GM13976 (cell line): ENCODE measurements at regions of chr11 and their contacts with region 1.

Region 1: GRCh38 chr11:115912484-115912945 is 408.3 kb upstream of the CADM1 start:
- DNase-seq: no peak
- CTCF ChIP-seq: peak; percentile 30

Region 2: DNA sequence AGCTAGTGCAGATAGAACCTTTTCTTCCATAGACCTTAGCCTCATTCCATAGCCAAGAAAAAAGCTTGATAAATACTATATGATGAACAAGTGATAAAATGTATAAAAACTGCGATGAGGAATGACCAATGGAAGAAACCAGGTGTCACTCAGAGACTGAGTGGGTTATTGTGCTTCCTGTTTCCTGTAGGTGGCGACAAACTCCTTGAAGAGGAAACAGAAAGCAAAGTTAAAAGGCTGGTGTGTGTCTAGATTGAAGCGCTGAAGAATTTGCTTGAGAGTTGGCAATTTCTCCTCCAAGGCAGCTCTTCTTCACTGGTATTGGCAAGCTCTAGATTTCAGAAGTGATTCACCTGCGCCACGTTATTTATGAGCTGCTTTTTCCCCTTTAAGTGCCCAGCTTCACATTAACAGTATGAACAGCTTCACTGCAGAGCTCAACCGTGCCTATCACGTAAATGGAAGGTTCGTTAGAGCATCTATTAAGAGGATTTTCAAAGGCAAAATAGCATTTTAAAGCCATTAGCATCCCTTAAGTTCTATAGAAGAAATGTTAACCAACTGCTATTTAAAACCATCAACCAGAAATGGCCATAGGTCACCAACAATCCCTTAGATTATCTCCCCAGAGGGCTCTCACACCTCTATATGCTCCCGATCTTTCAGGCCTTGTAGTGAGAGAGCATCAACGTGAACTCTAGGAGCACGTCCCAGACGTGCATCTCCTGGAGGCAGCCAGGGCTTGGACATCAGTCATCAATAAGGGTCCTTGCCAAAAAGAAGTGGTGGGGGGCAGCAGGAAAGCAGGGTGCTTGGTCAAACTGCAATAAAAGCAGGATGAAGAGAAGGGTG is 587.7 kb before region 1 on chr11:
- in situ Hi-C with region 1: loop called (anchors 25 kb)
- DNase-seq: peak; percentile 38
- CTCF ChIP-seq: peak; percentile 79